A673 (cell line): ENCODE measurements at regions of chr11 and their contacts with region 1.

Region 1: GRCh38 chr11:67382276-67383136 is 9.1 kb upstream of the CLCF1 start:
- DNase-seq: peak; percentile 88
- H3K4me3 ChIP-seq: no peak overlapping the region
- H3K27ac ChIP-seq: no peak overlapping the region
- H3K4me1 ChIP-seq: peaks cover 9% of the 10 kb centered on the region
- H3K27me3 ChIP-seq: no peaks in the 10 kb centered on the region
- CTCF ChIP-seq: peak; percentile 99

Region 2: DNA sequence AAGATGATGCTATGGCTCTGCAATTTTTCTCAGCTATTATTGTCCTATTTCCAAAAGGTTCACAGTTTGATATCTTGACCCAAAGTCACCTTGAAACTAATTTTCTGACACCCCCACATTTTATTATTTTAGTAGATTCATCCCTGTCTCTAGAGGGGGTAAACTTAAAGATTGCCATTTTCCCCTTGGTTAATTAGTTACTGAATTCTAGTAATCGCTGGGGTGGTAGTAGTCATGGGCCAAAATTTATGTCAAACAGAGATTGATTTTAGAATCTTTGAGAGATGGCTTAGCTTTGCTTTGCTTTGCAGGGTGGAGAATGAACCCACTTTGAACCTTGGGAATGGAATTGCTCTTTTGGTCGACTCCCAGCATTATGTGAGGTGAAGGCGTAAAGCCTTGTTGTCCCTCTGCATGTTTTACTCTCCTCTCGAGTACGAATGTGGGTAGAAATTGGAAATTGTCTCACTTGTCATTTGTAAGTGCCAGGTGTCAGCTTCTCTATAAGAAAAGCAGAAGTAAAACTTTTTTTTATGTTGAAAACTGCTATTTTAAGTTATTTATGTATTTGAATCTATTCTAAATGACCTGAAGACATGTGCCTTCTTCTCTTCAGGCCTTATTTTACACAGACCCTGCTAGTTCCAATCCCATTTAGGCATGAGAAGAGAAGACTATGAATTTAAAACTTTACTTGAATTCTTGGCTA is 581.6 kb before region 1 on chr11:
- CTCF ChIA-PET with region 1: interaction called, 12 read pairs
- POLR2A ChIA-PET with region 1: no interaction called
- intact Hi-C with region 1: no loop called
- DNase-seq: no peak
- H3K4me3 ChIP-seq: no peak overlapping the region
- H3K27ac ChIP-seq: no peak overlapping the region
- H3K4me1 ChIP-seq: no peaks in the 10 kb centered on the region
- H3K27me3 ChIP-seq: no peaks in the 10 kb centered on the region
- CTCF ChIP-seq: no peak

Region 3: GRCh38 chr11:67053896-67054842 is 328.3 kb before region 1 on chr11:
- CTCF ChIA-PET with region 1: interaction called, 3 read pairs
- POLR2A ChIA-PET with region 1: no interaction called
- intact Hi-C with region 1: loop called (anchors 10 kb)
- DNase-seq: peak; percentile 71
- H3K4me3 ChIP-seq: no peak overlapping the region
- H3K27ac ChIP-seq: no peak overlapping the region
- H3K4me1 ChIP-seq: peaks cover 12% of the 10 kb centered on the region
- H3K27me3 ChIP-seq: no peaks in the 10 kb centered on the region
- CTCF ChIP-seq: peak; percentile 93

Region 4: DNA sequence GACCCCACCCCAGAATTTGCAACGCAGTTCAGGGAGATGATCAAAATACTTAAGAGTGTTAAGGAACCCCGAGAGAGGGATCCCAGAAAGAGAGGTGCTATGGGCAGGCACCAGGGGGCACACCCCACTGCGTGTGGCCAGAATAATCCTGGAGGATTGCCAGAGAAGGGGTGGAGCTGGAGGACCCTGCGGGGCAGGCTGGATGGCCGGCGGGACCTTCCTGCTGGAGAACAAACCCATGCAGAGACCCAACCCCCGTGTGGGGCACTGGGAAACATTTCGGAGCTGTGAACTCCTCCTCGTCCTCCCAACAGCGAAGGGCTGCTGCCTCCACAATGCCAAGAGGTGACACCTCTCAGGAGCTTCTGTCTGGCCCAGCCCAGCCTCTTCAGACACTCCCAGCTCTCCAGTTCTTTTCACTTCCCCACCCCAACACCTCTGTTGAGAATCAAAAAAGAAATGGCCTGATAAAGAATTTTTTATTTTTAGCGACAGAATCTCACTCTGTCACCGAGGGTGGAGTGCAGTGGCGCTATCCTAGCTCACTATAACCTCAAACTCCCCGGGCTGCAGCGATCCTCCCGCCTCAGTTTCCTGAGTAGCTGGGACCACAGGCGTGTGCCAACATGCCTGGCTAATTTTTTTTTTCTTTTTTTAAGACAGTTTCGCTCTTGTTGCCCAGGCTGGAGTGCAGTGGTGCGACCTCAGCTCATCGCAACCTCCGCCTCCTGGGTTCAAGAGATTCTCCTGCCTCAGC is 300.3 kb before region 1 on chr11:
- CTCF ChIA-PET with region 1: interaction called, 9 read pairs
- POLR2A ChIA-PET with region 1: no interaction called
- intact Hi-C with region 1: loop called (anchors 10 kb)
- DNase-seq: no peak
- H3K4me3 ChIP-seq: no peak overlapping the region
- H3K27ac ChIP-seq: no peak overlapping the region
- H3K4me1 ChIP-seq: peaks cover 19% of the 10 kb centered on the region
- H3K27me3 ChIP-seq: no peaks in the 10 kb centered on the region
- CTCF ChIP-seq: no peak

Region 5: DNA sequence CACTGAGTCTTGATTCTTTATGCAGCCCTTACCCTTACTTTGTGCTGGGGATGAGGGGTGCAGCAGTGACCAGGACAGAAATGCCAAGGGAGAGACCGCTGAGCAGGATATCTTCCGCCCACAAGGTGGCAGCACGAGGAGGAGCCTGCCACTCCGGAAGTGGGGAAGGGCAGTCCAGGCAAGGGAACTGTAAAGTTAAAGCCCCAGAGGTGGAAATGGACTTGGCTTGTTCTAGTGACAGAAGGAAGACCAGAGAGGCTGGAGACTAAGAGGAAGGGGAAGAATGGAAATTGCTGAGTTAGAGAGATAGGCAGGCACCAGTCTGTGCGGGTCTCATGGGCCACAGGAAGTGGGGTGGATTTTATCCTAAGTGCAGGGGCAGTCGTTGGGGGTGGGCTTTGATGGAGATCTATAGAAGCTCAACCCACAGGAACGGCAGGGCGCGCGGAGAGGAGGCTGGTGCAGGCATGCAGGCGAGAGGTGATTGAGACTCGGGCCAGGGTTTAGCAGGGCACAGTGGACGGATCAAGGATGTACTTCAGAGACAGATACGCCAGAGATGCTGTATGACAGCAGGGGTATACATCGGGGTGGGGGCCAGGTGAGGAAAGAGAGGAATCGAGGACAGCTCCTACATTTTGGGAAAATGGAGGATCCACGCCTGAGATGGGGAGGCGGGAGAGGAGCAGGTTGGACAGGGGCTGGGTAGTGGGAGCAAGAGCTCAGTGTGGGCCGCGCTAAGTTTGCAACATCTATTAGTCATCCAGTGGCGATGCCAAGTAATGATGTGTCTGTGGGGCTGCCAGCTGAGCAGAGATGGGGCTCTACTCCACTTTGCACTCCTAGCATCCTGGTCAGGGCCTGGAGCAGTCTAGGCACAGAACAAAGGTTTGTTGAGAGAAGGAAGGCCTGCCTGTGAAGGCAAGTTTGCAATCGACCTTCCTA is 119.5 kb before region 1 on chr11:
- CTCF ChIA-PET with region 1: interaction called, 5 read pairs
- POLR2A ChIA-PET with region 1: no interaction called
- intact Hi-C with region 1: loop called (anchors 2 kb)
- DNase-seq: peak; percentile 90
- H3K4me3 ChIP-seq: no peak overlapping the region
- H3K27ac ChIP-seq: no peak overlapping the region
- H3K4me1 ChIP-seq: peaks cover 30% of the 10 kb centered on the region
- H3K27me3 ChIP-seq: no peaks in the 10 kb centered on the region
- CTCF ChIP-seq: peak; percentile 99

Region 6: DNA sequence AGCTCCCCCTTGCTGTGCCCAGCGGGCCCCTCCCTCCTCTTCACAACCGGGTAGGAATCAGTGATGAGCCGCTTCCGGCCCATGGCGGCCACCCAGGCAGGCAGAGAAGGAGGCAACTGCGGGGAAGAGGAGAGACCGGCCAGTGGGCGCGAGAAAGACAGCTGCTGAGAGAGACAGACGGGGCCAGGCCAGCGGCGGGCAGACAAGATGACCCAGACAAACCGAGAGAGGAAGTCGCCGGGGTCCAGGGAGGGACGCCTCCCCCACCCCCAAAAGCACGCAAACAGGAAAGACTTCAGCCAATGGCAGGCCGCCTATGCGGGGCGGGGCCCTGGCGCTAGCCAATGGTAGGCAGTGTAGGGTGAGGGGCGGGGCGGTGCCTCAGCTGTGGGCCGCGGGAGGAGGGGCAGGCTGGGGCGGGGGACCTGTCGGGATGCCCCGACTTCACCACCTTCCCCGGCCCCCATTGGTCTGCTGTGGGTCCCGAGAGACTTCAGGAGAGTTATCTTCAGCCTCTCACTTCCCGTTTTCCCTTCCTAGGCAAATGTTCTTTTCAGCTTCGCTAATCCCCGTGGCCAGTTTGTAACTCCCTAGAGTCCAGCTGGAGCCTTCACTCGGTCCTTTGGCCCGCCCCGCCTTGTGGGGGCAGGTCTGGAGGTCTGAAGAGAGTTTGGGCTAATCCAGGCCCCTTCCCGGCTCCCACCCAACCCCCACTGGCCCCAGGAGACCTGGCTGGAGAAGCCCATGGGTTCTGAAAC is 29.0 kb before region 1 on chr11 and contains the start of gene POLD4:
- CTCF ChIA-PET with region 1: interaction called, 78 read pairs
- POLR2A ChIA-PET with region 1: no interaction called
- intact Hi-C with region 1: loop called (anchors 1 kb)
- DNase-seq: peak; percentile 98
- H3K4me3 ChIP-seq: peak within 1 kb of the TSS; percentile 90
- H3K27ac ChIP-seq: peak within 1 kb of the TSS; percentile 91
- H3K4me1 ChIP-seq: peaks cover 25% of the 10 kb centered on the region
- H3K27me3 ChIP-seq: no peaks in the 10 kb centered on the region
- CTCF ChIP-seq: no peak
- total RNA-seq, gene POLD4: 13.2 and 14.3 TPM in 2 replicates

Region 7: GRCh38 chr11:67401495-67402191 is 19.1 kb after region 1 on chr11 and contains the start of gene PPP1CA:
- CTCF ChIA-PET with region 1: interaction called, 10 read pairs
- POLR2A ChIA-PET with region 1: interaction called, 4 read pairs
- intact Hi-C with region 1: no loop called
- DNase-seq: peak; percentile 95
- H3K4me3 ChIP-seq: peak within 1 kb of the TSS; percentile 87
- H3K27ac ChIP-seq: peak within 1 kb of the TSS; percentile 95
- H3K4me1 ChIP-seq: peaks cover 20% of the 10 kb centered on the region
- H3K27me3 ChIP-seq: no peaks in the 10 kb centered on the region
- CTCF ChIP-seq: no peak; the same call in 1 of the 2 replicates
- total RNA-seq, gene PPP1CA: 239 TPM in 2 replicates